B cell (primary cell): ENCODE measurements at regions of chr7 and their contacts with region 1.

Region 1: GRCh38 chr7:141975806-141976523 is 2.4 kb upstream of the TAS2R38 start:
- DNase-seq: peak; percentile 71
- ATAC-seq: peak; percentile 69
- H3K4me3 ChIP-seq: peak overlapping the region; percentile 28 to 70 (median 54)
- H3K4me3 Mint-ChIP-seq: peak overlapping the region; percentile 77
- H3K27ac ChIP-seq: peak overlapping the region; percentile 65 to 80
- H3K27ac Mint-ChIP-seq: peak overlapping the region; percentile 72
- H3K4me1 ChIP-seq: peaks cover 13 to 18% of the 10 kb centered on the region in 2 donors
- H3K4me1 Mint-ChIP-seq: peaks cover 25% of the 10 kb centered on the region
- H3K27me3 ChIP-seq: no peaks in the 10 kb centered on the region
- H3K27me3 Mint-ChIP-seq: no peaks in the 10 kb centered on the region
- CTCF ChIP-seq: peak; percentile 74

Region 2: GRCh38 chr7:141960687-141961422 is 15.1 kb before region 1 on chr7:
- CTCF ChIA-PET with region 1: interaction called, 21 read pairs
- POLR2A ChIA-PET with region 1: no interaction called
- intact Hi-C with region 1: no loop called
- DNase-seq: peak; percentile 47
- ATAC-seq: peak; percentile 65
- H3K4me3 ChIP-seq: no peak overlapping the region
- H3K4me3 Mint-ChIP-seq: peak overlapping the region; percentile 33
- H3K27ac ChIP-seq: peak overlapping the region; percentile 65 to 76
- H3K27ac Mint-ChIP-seq: peak overlapping the region; percentile 87
- H3K4me1 ChIP-seq: peaks cover 12 to 21% of the 10 kb centered on the region in 2 donors
- H3K4me1 Mint-ChIP-seq: peaks cover 20% of the 10 kb centered on the region
- H3K27me3 ChIP-seq: no peaks in the 10 kb centered on the region
- H3K27me3 Mint-ChIP-seq: no peaks in the 10 kb centered on the region
- CTCF ChIP-seq: no peak

Region 3: GRCh38 chr7:142188846-142189245 is 212.9 kb after region 1 on chr7:
- CTCF ChIA-PET with region 1: no interaction called
- POLR2A ChIA-PET with region 1: no interaction called
- intact Hi-C with region 1: loop called (anchors 10 kb)
- DNase-seq: no peak
- ATAC-seq: no peak
- H3K4me3 ChIP-seq: no peak overlapping the region
- H3K4me3 Mint-ChIP-seq: no peak overlapping the region
- H3K27ac ChIP-seq: no peak overlapping the region
- H3K27ac Mint-ChIP-seq: no peak overlapping the region
- H3K4me1 ChIP-seq: no peaks in the 10 kb centered on the region
- H3K4me1 Mint-ChIP-seq: no peaks in the 10 kb centered on the region
- H3K27me3 ChIP-seq: no peaks in the 10 kb centered on the region
- H3K27me3 Mint-ChIP-seq: peaks cover 13% of the 10 kb centered on the region
- CTCF ChIP-seq: no peak

Region 4: GRCh38 chr7:142478479-142479072 is 502.6 kb after region 1 on chr7:
- CTCF ChIA-PET with region 1: interaction called, 3 read pairs
- POLR2A ChIA-PET with region 1: no interaction called
- intact Hi-C with region 1: loop called (anchors 5 kb)
- DNase-seq: peak; percentile 47
- ATAC-seq: peak; percentile 43
- H3K4me3 ChIP-seq: no peak overlapping the region
- H3K4me3 Mint-ChIP-seq: no peak overlapping the region
- H3K27ac ChIP-seq: no peak overlapping the region
- H3K27ac Mint-ChIP-seq: no peak overlapping the region
- H3K4me1 ChIP-seq: peaks cover 5 to 14% of the 10 kb centered on the region in 2 donors
- H3K4me1 Mint-ChIP-seq: peaks cover 14% of the 10 kb centered on the region
- H3K27me3 ChIP-seq: peaks cover 0 to 2% (median 0%) of the 10 kb centered on the region in 4 experiments
- H3K27me3 Mint-ChIP-seq: peaks cover 6% of the 10 kb centered on the region
- CTCF ChIP-seq: peak; percentile 67